Activated naive CD4-positive, alpha-beta T cell treated with anti-CD3 and anti-CD28 coated beads for 36 hours (primary cell): ENCODE measurements at regions of chr6 and their contacts with region 1.

Region 1: DNA sequence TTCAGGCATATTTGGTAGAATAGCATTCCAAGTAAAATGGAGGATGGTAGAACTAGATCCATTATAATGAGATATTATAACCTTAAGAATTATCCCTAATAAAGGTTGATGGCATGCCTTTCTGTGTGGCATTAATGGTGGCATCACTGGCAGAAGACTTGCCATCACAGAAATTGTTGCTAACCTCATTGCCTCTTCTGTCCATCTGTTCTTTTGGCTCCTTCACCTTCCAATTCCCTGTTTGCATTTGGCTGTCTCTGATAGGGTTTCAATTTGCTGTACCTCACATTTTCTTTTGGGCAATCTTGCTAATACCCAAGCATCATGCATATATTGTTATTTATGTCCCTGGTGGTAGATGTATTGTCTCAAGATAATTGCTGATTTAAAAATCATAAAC is 98.9 kb downstream of the SMPDL3A start:
- DNase-seq: no peak
- H3K4me3 Mint-ChIP-seq: no peak overlapping the region
- H3K27ac Mint-ChIP-seq: no peak overlapping the region
- H3K4me1 Mint-ChIP-seq: no peaks in the 10 kb centered on the region
- H3K27me3 Mint-ChIP-seq: no peaks in the 10 kb centered on the region

Region 2: DNA sequence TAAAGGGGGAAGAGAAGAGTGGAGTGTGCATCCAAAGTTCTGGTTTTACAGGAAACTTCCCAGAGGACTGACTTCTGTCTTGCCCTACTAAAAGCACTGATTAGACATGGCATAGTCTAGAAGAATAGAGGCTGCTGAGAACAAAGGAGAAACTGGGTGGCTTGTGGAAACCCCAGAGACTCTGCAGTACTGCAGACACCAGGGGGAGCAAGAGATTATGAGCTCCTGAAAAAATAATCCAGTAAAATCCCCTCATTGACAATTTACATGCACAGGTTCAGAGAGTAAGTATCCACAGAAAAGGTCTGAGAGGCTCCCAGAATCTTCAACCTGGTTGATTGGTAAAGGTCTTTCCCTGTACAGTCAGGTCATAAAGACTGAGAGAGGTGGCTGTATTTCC is 59.4 kb after region 1 on chr6:
- CTCF ChIA-PET with region 1: no interaction called
- intact Hi-C with region 1: loop called (anchors 2 kb)
- DNase-seq: no peak
- H3K4me3 Mint-ChIP-seq: no peak overlapping the region
- H3K27ac Mint-ChIP-seq: no peak overlapping the region
- H3K4me1 Mint-ChIP-seq: no peaks in the 10 kb centered on the region
- H3K27me3 Mint-ChIP-seq: no peaks in the 10 kb centered on the region